HEK293 (cell line): ENCODE measurements at regions of chr1 and their contacts with region 1.

Region 1: DNA sequence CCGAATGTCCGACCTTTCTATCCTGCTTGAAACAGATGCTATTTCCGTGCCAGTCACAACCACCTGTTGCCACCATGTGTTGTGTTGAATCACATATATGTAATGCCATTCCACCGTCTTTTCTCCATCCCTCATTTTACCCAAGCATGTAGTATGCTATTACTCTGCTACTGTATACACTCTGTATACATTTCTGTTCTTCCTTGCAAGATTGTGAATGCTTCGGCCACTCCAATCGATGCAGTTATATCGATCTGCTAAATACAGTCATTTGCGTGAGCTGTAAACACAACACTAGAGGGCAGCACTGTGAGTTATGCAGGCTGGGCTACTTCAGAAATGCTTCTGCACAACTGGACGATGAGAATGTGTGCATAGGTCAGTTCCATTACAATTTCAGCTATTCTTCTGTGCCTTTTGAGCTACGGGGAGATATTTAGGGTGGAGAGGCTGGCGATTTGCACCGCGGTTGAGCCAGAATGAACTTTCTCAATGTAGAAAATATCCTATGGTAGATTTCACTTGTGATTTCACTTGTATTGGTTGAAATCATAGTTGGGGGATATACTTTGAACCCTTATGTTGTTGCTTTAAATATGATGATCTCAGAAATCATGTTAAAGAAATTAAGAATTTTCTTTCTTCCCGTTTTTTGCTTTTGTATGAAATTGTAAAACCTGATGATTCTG is 289.8 kb downstream of the NTNG1 start:
- H3K4me3 ChIP-seq: no peak overlapping the region
- H3K27ac ChIP-seq: no peak overlapping the region
- H3K4me1 ChIP-seq: no peaks in the 10 kb centered on the region
- CTCF ChIP-seq: peak; percentile 66

Region 2: DNA sequence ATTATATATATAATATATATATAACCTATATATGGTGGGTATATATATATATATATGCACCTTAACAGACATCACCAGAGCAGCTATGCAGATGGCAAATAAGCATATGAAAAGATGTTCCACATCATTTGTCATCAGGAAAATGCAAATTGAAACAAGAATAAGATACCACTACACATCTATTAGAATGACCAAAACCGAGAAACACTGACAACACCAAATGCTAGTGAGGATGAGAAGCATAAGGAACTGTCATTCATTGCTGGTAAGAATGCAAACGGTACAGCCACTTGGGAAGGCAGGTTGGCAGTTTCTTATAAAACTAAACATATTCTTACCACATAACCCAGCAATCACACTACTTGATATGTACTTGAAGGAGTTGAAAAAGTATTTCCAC is 594.0 kb before region 1 on chr1:
- CTCF ChIA-PET with region 1: no interaction called
- POLR2A ChIA-PET with region 1: no interaction called
- H3K4me3 ChIP-seq: no peak overlapping the region
- H3K27ac ChIP-seq: no peak overlapping the region
- H3K4me1 ChIP-seq: no peaks in the 10 kb centered on the region
- CTCF ChIP-seq: no peak

Region 3: DNA sequence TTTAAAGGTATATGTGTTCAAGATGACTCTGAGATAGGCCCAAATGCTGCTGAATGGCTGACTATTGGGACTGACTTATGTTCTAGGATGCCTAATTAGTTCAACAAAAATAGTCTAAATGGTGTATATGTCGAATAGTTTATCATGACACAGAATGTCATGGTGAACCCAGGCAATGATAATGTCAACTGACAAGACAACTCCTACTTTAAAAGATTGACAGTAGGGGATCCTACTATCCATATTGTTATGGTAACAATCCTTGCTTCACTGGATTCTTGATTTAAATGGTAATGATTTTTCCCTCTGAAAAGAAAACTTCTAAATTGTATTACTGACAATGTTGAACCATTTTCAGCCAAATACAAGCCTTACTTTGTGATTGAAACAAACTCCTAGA is 10.1 kb before region 1 on chr1:
- CTCF ChIA-PET with region 1: interaction called, 12 read pairs
- POLR2A ChIA-PET with region 1: no interaction called
- H3K4me3 ChIP-seq: no peak overlapping the region
- H3K27ac ChIP-seq: no peak overlapping the region
- H3K4me1 ChIP-seq: no peaks in the 10 kb centered on the region
- CTCF ChIP-seq: no peak

Region 4: GRCh38 chr1:107750358-107750959 is 319.8 kb after region 1 on chr1:
- CTCF ChIA-PET with region 1: interaction called, 68 read pairs
- POLR2A ChIA-PET with region 1: no interaction called
- H3K4me3 ChIP-seq: no peak overlapping the region
- H3K27ac ChIP-seq: no peak overlapping the region
- H3K4me1 ChIP-seq: no peaks in the 10 kb centered on the region
- CTCF ChIP-seq: peak; percentile 51; the same call in 1 of the 2 replicates